Ascending aorta (tissue), 2 donors: ENCODE measurements at regions of chr1 and their contacts with region 1.

Region 1: DNA sequence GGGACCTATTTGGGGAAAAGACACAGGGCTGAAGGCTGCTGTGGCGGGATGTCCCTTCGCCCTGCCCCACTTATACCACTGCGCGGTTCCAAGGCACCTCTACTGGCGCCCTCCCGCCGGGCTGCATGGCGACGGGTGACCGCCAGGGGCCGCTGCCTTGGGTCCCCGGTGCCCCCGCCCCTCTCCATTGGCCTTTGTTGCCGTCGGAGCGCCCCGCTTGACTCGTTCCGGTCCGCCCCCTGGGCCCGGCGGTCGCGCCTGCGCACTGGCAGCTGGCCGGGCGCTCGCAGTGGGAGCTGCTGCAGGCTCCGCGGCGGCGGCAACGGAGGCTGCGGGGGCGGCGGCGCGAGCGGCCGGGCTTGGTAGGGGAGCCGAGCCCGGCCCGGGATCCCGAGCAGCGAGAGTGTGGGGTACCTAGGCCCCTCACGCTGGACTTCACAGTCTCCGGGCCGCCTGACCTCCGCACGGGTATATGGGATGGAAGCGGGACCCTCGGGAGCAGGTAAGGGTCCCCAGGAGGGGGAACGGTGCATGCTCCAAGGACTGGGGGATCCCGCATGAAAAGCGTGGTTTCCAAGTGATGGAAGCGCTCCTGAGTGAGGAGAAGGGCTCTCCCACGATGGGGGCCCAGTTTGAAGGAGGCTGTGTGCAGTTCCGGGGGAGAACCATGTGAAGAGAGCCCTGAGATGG is at the start of gene AGO1:
- DNase-seq: peak; percentile 77 to 96
- H3K4me3 ChIP-seq: peak within 1 kb of the TSS; percentile 81 to 90
- H3K27ac ChIP-seq: peak within 1 kb of the TSS; percentile 79 to 83
- H3K4me1 ChIP-seq: peaks cover 0 to 20% of the 10 kb centered on the region in 2 donors
- H3K27me3 ChIP-seq: no peaks in the 10 kb centered on the region
- CTCF ChIP-seq: peak; percentile 96
- total RNA-seq, gene AGO1: 24.2 TPM

Region 2: DNA sequence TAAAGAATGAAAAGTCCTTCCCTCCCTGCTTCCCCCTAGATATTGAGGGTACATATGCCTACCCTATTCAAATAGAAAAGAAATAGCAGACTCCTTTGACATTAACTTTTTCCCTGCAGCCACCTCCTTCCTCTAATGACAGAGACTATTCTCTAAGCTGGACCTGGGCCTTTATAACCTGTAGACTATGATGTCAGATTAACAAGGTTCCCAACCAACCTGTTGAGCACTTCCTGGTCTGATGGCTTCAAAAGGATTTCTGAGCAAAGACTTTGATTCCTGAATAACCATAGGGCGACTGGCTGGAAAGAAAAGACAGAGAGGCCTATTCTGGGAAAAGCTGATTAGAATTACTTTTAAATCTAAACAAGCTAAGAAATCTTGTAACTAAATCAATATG is 146.0 kb before region 1 on chr1:
- intact Hi-C with region 1: no loop called
- DNase-seq: no peak
- H3K4me3 ChIP-seq: no peak overlapping the region
- H3K27ac ChIP-seq: no peak overlapping the region
- H3K4me1 ChIP-seq: no peaks in the 10 kb centered on the region
- H3K27me3 ChIP-seq: no peaks in the 10 kb centered on the region
- CTCF ChIP-seq: no peak

Region 3: GRCh38 chr1:35797380-35797779 is 85.7 kb before region 1 on chr1:
- intact Hi-C with region 1: no loop called
- DNase-seq: no peak
- H3K4me3 ChIP-seq: no peak overlapping the region
- H3K27ac ChIP-seq: no peak overlapping the region
- H3K4me1 ChIP-seq: no peaks in the 10 kb centered on the region
- H3K27me3 ChIP-seq: no peaks in the 10 kb centered on the region
- CTCF ChIP-seq: no peak

Region 4: DNA sequence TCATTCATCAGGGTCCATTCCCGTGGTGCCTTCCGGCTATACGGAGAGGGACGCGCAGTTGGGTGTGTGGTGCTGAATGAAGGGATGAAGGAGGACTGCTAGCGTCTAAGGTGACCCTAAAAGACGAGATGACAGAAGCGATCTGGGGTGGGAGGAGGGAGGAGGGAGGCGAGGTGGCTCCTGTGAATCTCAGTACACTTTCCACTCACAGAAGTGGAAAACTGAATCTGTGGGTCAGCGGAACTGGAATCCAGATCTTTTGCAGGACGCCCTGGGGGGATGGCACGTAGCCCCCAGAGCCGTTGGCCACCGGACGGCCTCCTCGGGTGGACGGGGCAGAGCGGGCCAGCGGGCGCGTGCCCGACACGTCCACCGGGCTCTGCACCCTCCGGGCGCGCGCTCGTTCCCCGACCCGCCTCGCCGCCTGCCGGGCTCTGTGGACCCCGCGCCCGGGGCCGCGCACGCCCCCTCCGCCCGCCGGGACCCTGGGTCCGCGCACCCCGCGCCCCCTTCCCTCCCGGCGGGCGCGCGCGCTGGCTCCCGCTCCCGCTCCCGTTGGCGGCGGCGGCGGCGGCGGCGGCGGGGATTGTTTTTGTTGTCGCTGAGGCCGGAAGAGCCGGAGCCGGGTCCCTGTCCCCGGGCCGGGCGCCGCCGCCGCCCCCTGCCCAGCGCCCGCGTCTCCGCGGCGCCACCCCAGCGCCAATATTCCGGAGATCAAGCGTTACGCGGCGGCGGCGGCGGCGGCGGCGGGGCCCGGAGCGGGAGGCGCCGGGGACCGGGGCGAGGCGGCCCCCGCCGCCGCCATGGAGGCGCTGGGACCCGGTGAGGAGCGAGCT is 75.3 kb before region 1 on chr1 and contains the start of gene AGO4:
- intact Hi-C with region 1: loop called (anchors 2 kb)
- DNase-seq: peak; percentile 18 to 82
- H3K4me3 ChIP-seq: peak within 1 kb of the TSS; percentile 83 to 99
- H3K27ac ChIP-seq: peak within 1 kb of the TSS; percentile 90 to 97
- H3K4me1 ChIP-seq: peaks cover 0 to 7% of the 10 kb centered on the region in 2 donors
- H3K27me3 ChIP-seq: no peaks in the 10 kb centered on the region
- CTCF ChIP-seq: peak in 1 of 3 experiments; percentile 7
- total RNA-seq, gene AGO4: 40.4 TPM

Region 5: GRCh38 chr1:35915693-35916092 is 32.6 kb after region 1 on chr1:
- intact Hi-C with region 1: no loop called
- DNase-seq: no peak
- H3K4me3 ChIP-seq: no peak overlapping the region
- H3K27ac ChIP-seq: no peak overlapping the region
- H3K4me1 ChIP-seq: no peaks in the 10 kb centered on the region
- H3K27me3 ChIP-seq: no peaks in the 10 kb centered on the region
- CTCF ChIP-seq: no peak